ENCODE measurements at regions of chr6 and their contacts with region 1.

Region 1: GRCh38 chr6:13648851-13649250 is 33.7 kb downstream of the NOL7 start:
- DNase-seq: no peak
- ATAC-seq: no peak
- H3K4me3 ChIP-seq: no peak overlapping the region
- H3K4me3 Mint-ChIP-seq: no peak overlapping the region
- H3K27ac ChIP-seq: no peak overlapping the region
- H3K27ac Mint-ChIP-seq: no peak overlapping the region
- H3K4me1 ChIP-seq: no peaks in the 10 kb centered on the region
- H3K4me1 Mint-ChIP-seq: peaks cover 16% of the 10 kb centered on the region
- H3K27me3 ChIP-seq: no peaks in the 10 kb centered on the region
- H3K27me3 Mint-ChIP-seq: no peaks in the 10 kb centered on the region
- CTCF ChIP-seq: no peak

Region 2: GRCh38 chr6:13661647-13662046 is 12.8 kb after region 1 on chr6:
- CTCF ChIA-PET with region 1: no interaction called
- POLR2A ChIA-PET with region 1: no interaction called
- intact Hi-C with region 1: loop called in 1 of 2 experiments (anchors 2 kb)
- DNase-seq: no peak
- ATAC-seq: no peak
- H3K4me3 ChIP-seq: no peak overlapping the region
- H3K4me3 Mint-ChIP-seq: no peak overlapping the region
- H3K27ac ChIP-seq: no peak overlapping the region
- H3K27ac Mint-ChIP-seq: no peak overlapping the region
- H3K4me1 ChIP-seq: peaks cover 37% of the 10 kb centered on the region
- H3K4me1 Mint-ChIP-seq: peaks cover 81% of the 10 kb centered on the region
- H3K27me3 ChIP-seq: no peaks in the 10 kb centered on the region
- H3K27me3 Mint-ChIP-seq: no peaks in the 10 kb centered on the region
- CTCF ChIP-seq: no peak

Region 3: DNA sequence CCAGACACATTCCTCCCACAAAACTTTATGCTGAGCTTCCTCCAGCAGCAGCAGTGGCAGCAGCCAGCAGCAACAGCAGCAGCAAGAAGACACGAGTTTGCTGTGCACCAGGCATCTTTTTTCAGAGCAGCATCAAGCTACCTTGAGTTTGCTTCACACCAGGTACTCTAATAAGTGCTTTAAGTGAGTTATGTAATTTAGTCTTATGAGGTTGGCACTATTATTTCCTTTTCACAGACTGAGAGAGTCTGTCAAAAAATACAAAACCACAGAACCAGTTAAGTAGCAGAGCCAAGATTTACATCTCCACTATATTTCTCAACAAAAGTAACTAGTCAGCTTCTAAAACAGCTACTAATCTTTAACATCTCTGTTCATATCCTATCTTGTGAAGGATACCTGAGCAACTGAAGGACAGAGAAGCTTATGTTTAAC is 39.1 kb after region 1 on chr6:
- CTCF ChIA-PET with region 1: no interaction called
- POLR2A ChIA-PET with region 1: no interaction called
- intact Hi-C with region 1: loop called in 1 of 2 experiments (anchors 5 kb)
- DNase-seq: peak in 5 of 9 experiments; percentile 26 to 69 (median 28)
- ATAC-seq: peak; percentile 80
- H3K4me3 ChIP-seq: peak overlapping the region in 1 of 2 experiments; percentile 22
- H3K4me3 Mint-ChIP-seq: peak overlapping the region; percentile 70
- H3K27ac ChIP-seq: peak overlapping the region; percentile 33 to 73
- H3K27ac Mint-ChIP-seq: peak overlapping the region; percentile 97
- H3K4me1 ChIP-seq: peaks cover 56% of the 10 kb centered on the region
- H3K4me1 Mint-ChIP-seq: peaks cover 73% of the 10 kb centered on the region
- H3K27me3 ChIP-seq: no peaks in the 10 kb centered on the region
- H3K27me3 Mint-ChIP-seq: no peaks in the 10 kb centered on the region
- CTCF ChIP-seq: no peak

Measured in CD8-positive, alpha-beta T cell (primary cell).